ENCODE measurements at regions of chr1 and their contacts with region 1.

Region 1: GRCh38 chr1:211698161-211699026 is 23.0 kb upstream of the NEK2 start:
- DNase-seq: peak; percentile 96
- H3K4me3 Mint-ChIP-seq: peak overlapping the region; percentile 63
- H3K27ac Mint-ChIP-seq: no peak overlapping the region
- H3K4me1 Mint-ChIP-seq: peaks cover 30% of the 10 kb centered on the region
- H3K27me3 Mint-ChIP-seq: peaks cover 20% of the 10 kb centered on the region

Region 2: GRCh38 chr1:211735208-211736170 is 37.1 kb after region 1 on chr1:
- intact Hi-C with region 1: loop called (anchors 5 kb)
- DNase-seq: no peak
- H3K4me3 Mint-ChIP-seq: no peak overlapping the region
- H3K27ac Mint-ChIP-seq: no peak overlapping the region
- H3K4me1 Mint-ChIP-seq: peaks cover 26% of the 10 kb centered on the region
- H3K27me3 Mint-ChIP-seq: peaks cover 2% of the 10 kb centered on the region

Region 3: GRCh38 chr1:211830330-211831142 is 132.1 kb after region 1 on chr1 and contains the start of gene LPGAT1:
- intact Hi-C with region 1: loop called (anchors 2 kb)
- DNase-seq: peak; percentile 91
- H3K4me3 Mint-ChIP-seq: peak within 1 kb of the TSS; percentile 91
- H3K27ac Mint-ChIP-seq: peak within 1 kb of the TSS; percentile 88
- H3K4me1 Mint-ChIP-seq: peaks cover 62% of the 10 kb centered on the region
- H3K27me3 Mint-ChIP-seq: no peaks in the 10 kb centered on the region
- total RNA-seq, gene LPGAT1: 35.6 and 42.1 TPM in 2 replicates

Region 4: DNA sequence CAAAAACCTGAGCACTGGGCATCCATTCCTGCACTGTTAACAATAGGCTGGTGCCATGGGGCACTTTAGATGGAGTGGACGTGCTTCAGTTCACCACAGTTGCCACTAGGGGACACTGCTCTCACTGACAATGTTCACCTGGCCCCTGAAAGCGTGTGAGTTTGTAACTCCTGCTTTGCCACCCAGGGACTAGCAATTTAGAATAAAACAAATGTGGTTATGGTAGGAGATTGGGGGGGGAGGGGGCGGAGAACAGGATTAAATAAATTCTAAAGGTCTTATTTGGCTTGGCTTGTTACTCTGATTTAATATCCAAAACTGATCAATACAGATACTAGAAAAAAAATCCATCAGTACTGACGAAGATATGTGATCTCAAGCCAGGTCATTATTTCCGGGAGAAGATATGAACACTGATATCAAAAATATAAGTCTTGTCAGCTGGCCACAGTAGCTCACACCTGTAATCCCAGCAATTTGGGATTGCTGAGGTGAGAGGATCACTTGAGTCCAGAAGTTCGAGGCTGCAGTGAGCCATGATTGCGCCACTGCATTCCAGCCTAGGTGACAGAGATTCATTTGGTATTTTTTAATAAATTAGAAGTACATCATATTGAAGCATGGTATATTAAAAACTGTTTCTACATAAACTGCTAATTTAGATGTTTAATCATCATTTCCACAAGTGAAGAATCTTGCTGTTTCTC is 313.8 kb after region 1 on chr1:
- intact Hi-C with region 1: loop called (anchors 1 kb)
- DNase-seq: peak; percentile 89
- H3K4me3 Mint-ChIP-seq: no peak overlapping the region
- H3K27ac Mint-ChIP-seq: no peak overlapping the region
- H3K4me1 Mint-ChIP-seq: peaks cover 3% of the 10 kb centered on the region
- H3K27me3 Mint-ChIP-seq: no peaks in the 10 kb centered on the region

Measured in activated CD4-positive, alpha-beta T cell treated with anti-CD3 and anti-CD28 coated beads, Interleukin-2, amount 10 ng/mL, durations not matched to agents 24 days and 14 days (primary cell).